Activated CD8-positive, alpha-beta T cell treated with anti-CD3 and anti-CD28 coated beads for 36 hours (primary cell): ENCODE measurements at regions of chr2 and their contacts with region 1.

Region 1: GRCh38 chr2:72973566-72974435 is 56.5 kb downstream of the EMX1 start:
- DNase-seq: peak; percentile 58
- ATAC-seq: peak; percentile 96
- H3K4me3 Mint-ChIP-seq: no peak overlapping the region
- H3K27ac Mint-ChIP-seq: no peak overlapping the region
- H3K4me1 Mint-ChIP-seq: no peaks in the 10 kb centered on the region
- H3K27me3 Mint-ChIP-seq: no peaks in the 10 kb centered on the region
- CTCF ChIP-seq: peak; percentile 73

Region 2: DNA sequence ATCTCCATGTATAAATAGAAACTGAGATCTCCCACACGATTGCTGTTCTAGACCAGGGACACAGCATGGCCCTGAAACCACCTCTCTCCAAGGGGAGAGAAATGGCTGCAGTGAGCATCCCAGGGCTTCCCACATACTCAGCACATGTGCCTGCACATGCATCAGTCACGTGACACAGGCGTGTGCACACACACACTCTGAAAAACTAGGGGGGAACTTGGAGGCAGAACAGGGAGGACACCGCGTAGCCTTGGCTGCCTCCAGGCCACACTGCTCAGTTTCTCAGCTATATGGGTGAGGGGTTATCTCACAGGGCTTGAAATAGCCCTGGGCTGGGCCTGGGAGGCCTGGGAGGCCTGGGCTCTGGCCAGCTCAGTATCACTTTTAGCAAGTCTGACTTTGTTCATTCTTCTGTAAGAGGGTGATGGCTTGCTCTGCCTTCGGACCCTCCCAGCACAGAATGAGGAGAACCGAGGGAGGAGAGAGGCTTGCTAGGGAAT is 10.4 kb after region 1 on chr2:
- CTCF ChIA-PET with region 1: interaction called, 16 read pairs
- POLR2A ChIA-PET with region 1: interaction called, 3 read pairs
- intact Hi-C with region 1: no loop called
- DNase-seq: no peak
- ATAC-seq: no peak
- H3K4me3 Mint-ChIP-seq: no peak overlapping the region
- H3K27ac Mint-ChIP-seq: no peak overlapping the region
- H3K4me1 Mint-ChIP-seq: no peaks in the 10 kb centered on the region
- H3K27me3 Mint-ChIP-seq: no peaks in the 10 kb centered on the region
- CTCF ChIP-seq: no peak

Region 3: GRCh38 chr2:73260034-73260984 is 286.5 kb after region 1 on chr2:
- CTCF ChIA-PET with region 1: no interaction called
- POLR2A ChIA-PET with region 1: no interaction called
- intact Hi-C with region 1: no loop called
- DNase-seq: no peak
- ATAC-seq: no peak
- H3K4me3 Mint-ChIP-seq: no peak overlapping the region
- H3K27ac Mint-ChIP-seq: no peak overlapping the region
- H3K4me1 Mint-ChIP-seq: peaks cover 3% of the 10 kb centered on the region
- H3K27me3 Mint-ChIP-seq: no peaks in the 10 kb centered on the region
- CTCF ChIP-seq: no peak